Lower leg skin (tissue), 4 donors: ENCODE measurements at regions of chr5 and their contacts with region 1.

Region 1: DNA sequence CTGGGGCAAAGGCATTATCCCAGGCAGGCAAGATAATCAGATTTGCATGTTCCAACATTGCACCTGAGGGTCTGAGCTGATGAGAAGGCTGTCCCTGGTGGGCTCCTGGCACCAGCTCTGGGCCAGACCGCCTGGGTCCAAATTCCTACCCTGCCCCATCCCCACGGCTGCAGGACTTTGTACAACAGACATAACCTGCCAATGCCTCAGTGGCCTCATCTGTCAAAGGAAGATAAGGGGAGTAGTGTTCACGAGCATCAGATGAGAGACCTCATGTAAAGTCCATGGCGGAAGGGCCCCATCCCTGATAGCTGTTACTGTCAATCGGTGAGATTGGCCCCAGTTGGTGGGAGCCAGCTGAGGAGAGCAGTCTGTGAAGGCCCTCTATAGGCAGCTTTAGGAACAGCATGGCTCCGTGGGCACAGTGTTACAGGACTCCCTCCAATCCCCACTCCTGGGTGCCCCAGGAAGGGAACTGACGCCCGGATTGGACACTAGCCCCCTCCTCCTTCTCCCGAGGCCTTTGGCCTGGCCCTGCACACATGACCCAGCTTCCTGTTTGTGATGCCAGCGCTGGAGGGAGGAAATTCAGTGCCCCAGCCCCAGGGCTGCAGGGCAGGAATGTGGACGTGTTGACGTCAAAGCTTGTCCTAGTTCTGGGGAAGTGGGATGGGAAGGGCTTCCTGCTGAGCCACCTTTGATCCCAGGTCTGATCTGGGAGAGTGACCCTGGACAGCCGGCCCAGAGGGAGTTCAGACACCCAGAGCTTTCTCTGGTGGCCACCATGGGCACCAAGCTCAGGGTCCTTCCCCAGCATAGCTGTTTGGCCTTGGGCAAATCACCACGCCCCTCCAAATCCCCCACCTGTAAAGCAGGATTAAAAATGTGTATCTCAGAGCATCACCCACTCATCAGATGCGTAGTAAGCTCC is 56.2 kb downstream of the DUSP1 start:
- DNase-seq: peak; percentile 86 to 96
- H3K4me3 ChIP-seq: no peak overlapping the region
- CTCF ChIP-seq: no peak
- POLR2A ChIP-seq: no peak

Region 2: DNA sequence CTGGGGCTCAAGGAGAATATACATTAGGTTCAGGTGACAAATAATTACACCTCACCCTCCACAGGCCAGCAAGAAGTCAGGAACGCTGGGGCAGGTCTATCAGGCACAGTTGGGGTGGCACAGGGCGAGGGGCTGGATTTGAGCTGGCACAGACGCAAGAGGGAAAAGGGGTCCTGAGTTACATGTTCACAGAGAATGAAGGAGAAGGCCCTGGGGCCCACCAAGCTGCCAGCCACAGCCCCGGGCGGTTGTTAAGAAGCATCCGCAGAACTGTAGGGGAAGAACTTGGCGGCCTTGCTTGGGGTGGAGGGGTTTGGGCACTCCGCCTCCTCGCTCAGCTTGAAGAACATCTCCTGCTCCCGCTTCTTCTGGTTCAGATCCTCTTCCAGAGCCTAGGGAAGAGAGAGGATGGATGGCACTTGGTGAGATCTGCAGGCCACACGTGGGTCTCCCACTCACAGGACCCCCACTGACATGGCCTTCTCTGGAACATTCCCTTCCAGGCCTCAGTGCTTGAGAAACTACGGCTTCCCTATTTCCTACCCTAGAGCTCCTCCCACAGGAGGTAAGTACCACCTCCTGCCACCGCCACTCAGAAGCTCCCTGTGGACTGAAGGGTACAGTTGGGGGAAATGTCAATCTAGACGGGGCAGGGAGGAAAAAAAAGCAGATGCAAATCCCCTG is 670.0 kb before region 1 on chr5:
- intact Hi-C with region 1: no loop called
- DNase-seq: peak in 1 of 2 donors; percentile 67
- H3K4me3 ChIP-seq: no peak overlapping the region
- CTCF ChIP-seq: no peak
- POLR2A ChIP-seq: no peak

Region 3: GRCh38 chr5:172770675-172771438 is 56.1 kb after region 1 on chr5 and contains the start of gene DUSP1:
- intact Hi-C with region 1: loop called (anchors 5 kb)
- DNase-seq: peak; percentile 99 to 100
- H3K4me3 ChIP-seq: peak within 1 kb of the TSS; percentile 75
- CTCF ChIP-seq: peak in 1 of 3 donors; percentile 13
- POLR2A ChIP-seq: peak in 1 of 2 donors; percentile 100
- total RNA-seq, gene DUSP1: 811 to 2,389 (median 1,820) TPM

Region 4: DNA sequence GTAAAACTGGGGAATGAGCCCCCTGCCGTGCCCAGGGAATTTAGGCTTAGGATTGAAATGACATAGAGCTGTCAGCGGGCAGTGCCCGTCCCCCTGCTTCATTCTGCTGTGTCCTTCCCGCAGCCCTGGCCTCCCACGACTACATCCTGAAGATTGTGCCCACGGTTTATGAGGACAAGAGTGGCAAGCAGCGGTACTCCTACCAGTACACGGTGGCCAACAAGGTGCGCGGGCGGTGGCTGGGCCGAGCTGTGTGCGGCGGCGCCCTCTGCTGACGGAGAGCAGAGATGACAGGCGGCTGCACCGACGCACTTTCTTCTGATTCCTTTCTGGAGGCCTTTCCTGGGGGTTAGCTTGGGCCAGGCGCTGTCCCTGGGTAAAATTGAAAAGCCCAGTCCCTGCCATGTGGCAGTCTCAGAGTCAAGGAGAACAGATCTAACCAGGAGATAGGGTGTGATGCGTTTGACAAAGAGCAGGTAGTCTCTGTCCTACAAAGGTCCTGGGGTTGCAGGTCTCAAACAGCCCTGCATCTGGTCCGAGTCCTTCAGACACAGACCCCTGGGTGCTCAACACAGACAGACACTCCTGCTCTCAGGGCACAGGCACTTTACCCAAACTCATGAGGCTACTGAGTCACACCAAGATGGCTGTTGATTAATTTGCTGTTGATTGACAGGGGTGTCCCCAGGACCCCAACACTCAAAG is 217.7 kb after region 1 on chr5:
- intact Hi-C with region 1: loop called (anchors 1 kb)
- DNase-seq: peak; percentile 51 to 96
- H3K4me3 ChIP-seq: no peak overlapping the region
- CTCF ChIP-seq: peak in 1 of 3 donors; percentile 94
- POLR2A ChIP-seq: no peak

Region 5: DNA sequence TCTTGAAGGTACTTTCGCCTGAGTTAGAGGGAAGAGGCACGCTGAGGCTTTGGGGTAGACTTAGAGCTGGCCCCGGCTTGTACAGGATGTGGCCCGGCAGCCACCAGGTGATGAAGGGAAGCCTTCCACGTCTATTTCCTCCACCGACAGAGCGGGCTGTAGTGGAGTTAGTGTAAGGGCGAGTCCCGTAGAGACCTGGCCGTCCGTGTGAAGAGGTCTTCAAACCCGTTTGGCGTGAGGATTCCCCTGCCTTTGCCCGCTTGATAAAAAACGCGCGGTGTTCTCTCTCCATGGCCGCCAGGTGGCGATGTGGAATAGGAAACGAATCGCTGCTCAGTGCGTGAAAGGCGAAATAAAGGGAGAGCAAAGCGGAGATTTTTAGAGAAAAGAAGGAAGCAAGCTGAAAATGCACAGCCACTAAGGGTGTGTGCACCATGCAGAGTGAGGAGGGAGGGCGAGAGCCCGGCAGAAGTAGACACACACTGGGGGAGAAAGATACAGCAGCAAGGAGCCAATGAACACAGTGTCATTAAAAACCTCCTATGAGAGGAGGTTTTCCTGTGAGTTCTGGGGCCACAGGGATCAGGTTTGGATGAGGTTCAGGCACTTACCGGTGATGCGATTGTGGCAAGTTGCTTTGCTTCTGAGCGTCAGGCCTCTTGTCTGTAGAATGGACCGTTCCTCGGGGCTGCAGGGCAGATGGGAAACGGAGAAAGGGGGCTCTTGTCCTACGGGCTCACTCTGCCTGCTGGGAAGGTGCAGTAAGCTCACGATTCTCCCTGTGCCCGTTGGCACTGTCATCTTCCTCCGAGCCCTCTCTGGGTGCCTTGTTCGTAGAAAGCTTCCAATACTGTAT is 579.3 kb after region 1 on chr5:
- intact Hi-C with region 1: loop called (anchors 5 kb)
- DNase-seq: peak; percentile 68 to 94
- H3K4me3 ChIP-seq: no peak overlapping the region
- CTCF ChIP-seq: peak in 1 of 3 donors; percentile 79
- POLR2A ChIP-seq: no peak